ENCODE measurements at regions of chr16 and their contacts with region 1.

Region 1: GRCh38 chr16:50806099-50807062 is 64.5 kb downstream of the CYLD start:
- DNase-seq: peak; percentile 62 to 91
- H3K4me3 ChIP-seq: peak overlapping the region; percentile 18 to 53 (median 38); a peak in 7 of 8 replicates
- H3K27ac ChIP-seq: no peak overlapping the region
- H3K4me1 ChIP-seq: peaks cover 0 to 5% (median 0%) of the 10 kb centered on the region in 4 experiments; a peak in 2 of 7 replicates
- H3K27me3 ChIP-seq: no peaks in the 10 kb centered on the region
- CTCF ChIP-seq: peak; percentile 72 to 94 (median 73)
- EP300 ChIP-seq: no peak
- POLR2A ChIP-seq: no peak
- RAD21 ChIP-seq: peak; percentile 80 to 83

Region 2: DNA sequence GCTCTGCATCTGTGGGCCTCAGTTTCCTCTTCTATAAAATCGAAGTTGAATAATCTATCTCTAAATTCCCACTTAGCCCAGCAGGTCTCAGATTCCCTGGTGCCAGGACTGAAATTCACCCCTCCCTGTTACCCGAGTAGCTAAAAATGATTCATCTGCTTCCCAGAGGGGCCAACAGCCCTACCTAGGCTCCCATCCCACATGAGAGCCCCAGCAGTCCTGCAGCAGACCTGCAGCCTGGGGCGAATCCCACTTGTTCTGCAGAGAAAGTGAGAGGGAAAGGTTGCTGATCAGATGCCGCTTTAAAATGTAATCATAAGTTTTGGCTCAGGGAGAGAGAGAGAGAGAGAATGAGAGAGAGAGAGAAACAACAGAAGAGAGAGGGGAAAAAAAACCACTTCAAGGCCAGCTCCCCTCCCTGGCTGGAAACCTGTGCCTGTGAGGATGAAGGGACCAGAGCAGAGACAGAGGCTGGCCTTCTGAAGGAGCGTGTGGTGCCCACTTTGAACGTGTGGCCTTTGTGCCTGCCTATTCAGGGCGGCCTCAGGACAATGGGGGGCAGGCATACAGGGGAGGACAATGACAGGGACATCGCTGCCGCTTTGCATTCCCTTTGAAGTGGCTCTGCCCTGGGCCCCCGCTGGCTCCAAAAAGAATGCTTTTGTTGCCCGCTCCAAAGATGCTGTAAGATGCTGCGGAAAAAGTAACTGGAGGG is 343.4 kb before region 1 on chr16:
- CTCF ChIA-PET with region 1: no interaction called
- POLR2A ChIA-PET with region 1: no interaction called
- DNase-seq: peak in 1 of 2 experiments; percentile 49
- H3K4me3 ChIP-seq: peak overlapping the region in 1 of 4 experiments; percentile 13; a peak in 2 of 8 replicates
- H3K27ac ChIP-seq: no peak overlapping the region
- H3K4me1 ChIP-seq: peaks cover 13 to 27% (median 20%) of the 10 kb centered on the region in 4 experiments
- H3K27me3 ChIP-seq: peaks cover 0 to 14% (median 10%) of the 10 kb centered on the region in 4 experiments; a peak in 4 of 7 replicates
- CTCF ChIP-seq: no peak
- EP300 ChIP-seq: no peak
- POLR2A ChIP-seq: no peak
- RAD21 ChIP-seq: no peak

Region 3: DNA sequence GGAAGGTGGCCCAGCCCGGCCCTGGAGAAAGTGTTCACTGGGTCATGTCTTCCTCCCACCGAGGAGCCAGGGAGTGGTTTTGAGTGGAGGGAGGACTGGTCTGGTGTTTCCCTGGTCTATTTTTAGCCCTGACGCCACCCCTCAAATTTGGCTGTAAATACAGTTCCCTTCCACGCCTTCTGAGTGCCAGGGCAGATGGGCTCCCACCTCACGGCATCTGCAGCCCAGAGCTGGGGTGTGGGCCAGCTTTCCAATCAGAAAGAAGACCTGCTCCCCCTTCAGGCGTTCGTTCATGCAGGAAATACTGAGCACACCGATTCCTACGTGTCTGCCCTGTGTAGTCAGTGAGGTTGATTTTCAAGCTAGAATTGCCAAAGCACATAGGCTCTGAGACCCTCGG is 179.0 kb before region 1 on chr16:
- CTCF ChIA-PET with region 1: interaction called, 10 read pairs
- POLR2A ChIA-PET with region 1: no interaction called
- DNase-seq: peak in 1 of 2 experiments; percentile 58
- H3K4me3 ChIP-seq: no peak overlapping the region
- H3K27ac ChIP-seq: no peak overlapping the region
- H3K4me1 ChIP-seq: no peaks in the 10 kb centered on the region
- H3K27me3 ChIP-seq: no peaks in the 10 kb centered on the region
- CTCF ChIP-seq: peak; percentile 24 to 48 (median 33)
- EP300 ChIP-seq: no peak
- POLR2A ChIP-seq: no peak
- RAD21 ChIP-seq: peak; percentile 35 to 41; a peak in 3 of 4 replicates

Region 4: DNA sequence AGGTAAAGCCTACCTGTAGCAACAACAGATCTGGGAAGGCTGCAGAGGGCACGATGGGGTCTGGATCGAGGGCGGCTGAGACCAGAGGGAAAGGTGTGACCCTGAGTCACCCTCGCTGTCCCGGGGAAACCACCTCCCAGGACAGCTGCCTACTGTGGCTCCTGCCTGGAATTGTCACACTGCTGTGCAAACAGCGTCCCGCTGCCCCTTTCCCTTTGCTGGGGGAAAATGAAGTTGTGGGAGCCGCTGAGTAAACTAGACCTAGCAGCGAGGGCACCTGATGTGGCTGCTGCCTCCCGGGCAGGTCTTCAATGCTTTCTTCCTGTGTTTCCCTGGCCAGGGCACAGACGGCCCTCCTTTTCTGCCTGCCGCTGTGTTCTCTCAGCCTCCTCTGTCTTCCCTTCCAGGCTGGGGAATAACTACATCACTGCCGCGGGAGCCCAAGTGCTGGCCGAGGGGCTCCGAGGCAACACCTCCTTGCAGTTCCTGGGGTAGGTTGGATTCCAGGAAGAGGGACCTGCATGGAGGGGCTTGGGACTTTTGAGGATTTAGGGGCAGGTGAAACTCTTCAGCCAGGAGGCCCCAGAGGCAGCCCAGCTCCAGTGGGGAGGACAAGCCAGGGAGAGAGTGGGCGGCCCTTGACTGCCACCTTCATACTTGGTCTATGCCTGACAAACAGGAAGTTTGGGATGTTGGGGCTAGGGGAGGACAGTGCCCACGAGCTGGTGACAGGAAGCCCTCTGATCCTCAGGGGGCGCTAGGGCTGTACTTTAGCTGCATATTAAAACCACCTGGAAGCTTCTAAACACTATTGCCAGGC is 86.7 kb before region 1 on chr16:
- CTCF ChIA-PET with region 1: interaction called, 11 read pairs
- POLR2A ChIA-PET with region 1: no interaction called
- DNase-seq: peak in 1 of 2 experiments; percentile 53
- H3K4me3 ChIP-seq: no peak overlapping the region
- H3K27ac ChIP-seq: no peak overlapping the region
- H3K4me1 ChIP-seq: peaks cover 0 to 9% (median 3%) of the 10 kb centered on the region in 4 experiments; a peak in 5 of 7 replicates
- H3K27me3 ChIP-seq: no peaks in the 10 kb centered on the region
- CTCF ChIP-seq: peak; percentile 35 to 55 (median 43); a peak in 3 of 4 replicates
- EP300 ChIP-seq: no peak
- POLR2A ChIP-seq: no peak
- RAD21 ChIP-seq: peak; percentile 15 to 29; a peak in 2 of 4 replicates

Region 5: DNA sequence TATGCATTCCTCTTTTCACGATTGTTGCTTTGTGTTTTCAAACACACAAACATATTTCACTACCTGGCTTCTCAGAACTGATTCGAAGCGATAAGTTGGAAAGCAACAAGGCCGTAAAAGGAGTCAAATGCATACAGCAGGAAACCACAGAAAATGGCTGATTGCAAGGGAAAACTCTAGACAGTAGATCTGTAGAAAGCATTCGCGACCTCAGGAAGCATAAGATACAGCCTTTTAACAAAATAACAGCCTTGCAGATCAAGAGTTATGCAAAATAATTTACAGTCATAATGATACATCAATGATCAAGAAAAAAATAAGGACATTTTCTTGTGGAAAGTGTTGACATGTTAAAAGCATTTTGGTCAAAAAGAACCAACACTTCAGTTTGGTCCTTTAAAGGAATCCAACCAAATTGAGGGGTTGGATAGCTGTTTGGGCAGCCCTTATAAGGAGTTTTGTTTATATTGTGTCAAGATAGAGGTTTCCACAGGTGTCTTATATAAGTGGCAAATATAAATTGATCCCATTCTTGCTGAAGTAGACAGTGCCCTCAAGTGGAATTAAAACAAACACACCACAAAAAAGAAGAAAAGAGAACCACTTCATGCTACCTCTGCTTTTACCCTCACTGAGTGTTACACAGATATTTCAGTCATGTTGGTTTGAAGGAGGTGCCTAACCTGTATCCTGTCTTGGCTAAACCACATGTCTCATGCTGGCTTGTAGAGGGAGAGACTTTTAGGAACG is 59.0 kb before region 1 on chr16:
- CTCF ChIA-PET with region 1: interaction called, 11 read pairs
- POLR2A ChIA-PET with region 1: interaction called, 3 read pairs
- DNase-seq: no peak
- H3K4me3 ChIP-seq: no peak overlapping the region
- H3K27ac ChIP-seq: no peak overlapping the region
- H3K4me1 ChIP-seq: peaks cover 0 to 8% (median 5%) of the 10 kb centered on the region in 4 experiments; a peak in 3 of 7 replicates
- H3K27me3 ChIP-seq: no peaks in the 10 kb centered on the region
- CTCF ChIP-seq: peak in 1 of 3 experiments; percentile 25; a peak in 2 of 4 replicates
- EP300 ChIP-seq: no peak
- POLR2A ChIP-seq: no peak
- RAD21 ChIP-seq: peak; percentile 54

Region 6: GRCh38 chr16:50781043-50781442 is 25.3 kb before region 1 on chr16:
- CTCF ChIA-PET with region 1: interaction called, 17 read pairs
- POLR2A ChIA-PET with region 1: interaction called, 3 read pairs
- DNase-seq: peak in 1 of 2 experiments; percentile 13
- H3K4me3 ChIP-seq: no peak overlapping the region
- H3K27ac ChIP-seq: no peak overlapping the region
- H3K4me1 ChIP-seq: no peaks in the 10 kb centered on the region
- H3K27me3 ChIP-seq: no peaks in the 10 kb centered on the region
- CTCF ChIP-seq: peak; percentile 50 to 79 (median 55)
- EP300 ChIP-seq: no peak
- POLR2A ChIP-seq: no peak
- RAD21 ChIP-seq: peak; percentile 24 to 46; a peak in 3 of 4 replicates

Region 7: DNA sequence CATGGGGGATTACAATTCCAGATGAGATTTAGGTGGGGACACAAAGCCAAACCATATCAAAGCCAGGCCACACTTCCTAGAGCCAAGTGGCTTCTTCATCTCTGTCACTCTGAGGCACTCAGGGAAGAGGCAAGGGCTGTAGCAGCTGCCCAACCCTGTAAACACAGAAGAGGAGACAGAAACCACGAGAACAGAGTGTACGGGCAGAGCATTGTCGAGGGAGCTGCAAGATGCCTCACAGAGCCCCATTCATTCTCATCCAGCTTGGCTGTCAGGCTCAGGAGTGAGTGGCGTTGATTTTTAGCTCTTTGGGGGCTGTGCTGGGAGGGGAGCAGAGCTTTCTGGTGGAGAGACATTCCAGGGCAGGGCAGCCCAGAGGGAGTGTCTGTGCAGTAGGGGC is 461.9 kb after region 1 on chr16:
- CTCF ChIA-PET with region 1: no interaction called
- POLR2A ChIA-PET with region 1: no interaction called
- DNase-seq: no peak
- H3K4me3 ChIP-seq: no peak overlapping the region
- H3K27ac ChIP-seq: no peak overlapping the region
- H3K4me1 ChIP-seq: no peaks in the 10 kb centered on the region
- H3K27me3 ChIP-seq: no peaks in the 10 kb centered on the region
- CTCF ChIP-seq: no peak
- EP300 ChIP-seq: no peak
- POLR2A ChIP-seq: no peak
- RAD21 ChIP-seq: no peak